ENCODE measurements at regions of chr17 and their contacts with region 1.

Region 1: DNA sequence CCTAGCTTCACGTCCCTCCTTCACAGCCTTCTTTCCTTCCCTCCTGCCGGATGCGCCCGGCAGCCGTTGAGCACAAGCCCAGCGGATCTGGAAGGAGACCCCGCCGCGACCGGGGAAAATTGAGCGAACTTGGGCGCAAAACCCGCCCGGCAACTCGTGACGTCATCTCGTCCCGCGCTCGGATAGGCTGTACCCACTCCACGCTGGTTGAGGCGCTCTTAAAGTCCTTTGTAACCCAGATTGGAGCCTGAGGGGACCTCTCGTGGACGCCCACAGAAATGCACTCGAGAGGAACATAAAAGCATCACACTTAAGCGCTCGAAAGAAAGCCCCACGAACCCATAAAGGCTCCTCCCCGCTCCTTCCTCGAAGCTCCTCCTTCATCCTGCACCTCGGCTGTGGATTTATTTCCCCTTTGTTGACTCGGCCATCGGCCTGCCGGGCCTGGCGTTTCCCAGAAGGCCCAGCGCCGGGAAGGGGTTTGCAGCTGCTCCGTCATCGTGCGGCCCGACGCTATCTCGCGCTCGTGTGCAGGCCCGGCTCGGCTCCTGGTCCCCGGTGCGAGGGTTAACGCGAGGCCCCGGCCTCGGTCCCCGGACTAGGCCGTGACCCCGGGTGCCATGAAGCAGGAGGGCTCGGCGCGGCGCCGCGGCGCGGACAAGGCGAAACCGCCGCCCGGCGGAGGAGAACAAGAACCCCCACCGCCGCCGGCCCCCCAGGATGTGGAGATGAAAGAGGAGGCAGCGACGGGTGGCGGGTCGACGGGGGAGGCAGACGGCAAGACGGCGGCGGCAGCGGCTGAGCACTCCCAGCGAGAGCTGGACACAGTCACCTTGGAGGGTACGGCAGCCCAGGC is at the start of gene PSMD3:
- DNase-seq: peak; percentile 100
- H3K4me3 Mint-ChIP-seq: peak within 1 kb of the TSS; percentile 77
- H3K27ac Mint-ChIP-seq: peak within 1 kb of the TSS; percentile 81
- H3K4me1 Mint-ChIP-seq: peaks cover 26% of the 10 kb centered on the region
- H3K27me3 Mint-ChIP-seq: peaks cover 43% of the 10 kb centered on the region
- CTCF ChIP-seq: no peak
- total RNA-seq, gene PSMD3: 2,152 and 2,179 TPM in 2 replicates

Region 2: GRCh38 chr17:39636927-39637736 is 343.4 kb before region 1 on chr17 and contains the start of gene STARD3:
- CTCF ChIA-PET with region 1: interaction called, 5,681 read pairs
- intact Hi-C with region 1: no loop called
- DNase-seq: no peak
- H3K4me3 Mint-ChIP-seq: peak within 1 kb of the TSS; percentile 71
- H3K27ac Mint-ChIP-seq: peak within 1 kb of the TSS; percentile 28
- H3K4me1 Mint-ChIP-seq: peaks cover 61% of the 10 kb centered on the region
- H3K27me3 Mint-ChIP-seq: peaks cover 5% of the 10 kb centered on the region
- CTCF ChIP-seq: no peak
- total RNA-seq, gene STARD3: 2,579 and 2,697 TPM in 2 replicates

Region 3: DNA sequence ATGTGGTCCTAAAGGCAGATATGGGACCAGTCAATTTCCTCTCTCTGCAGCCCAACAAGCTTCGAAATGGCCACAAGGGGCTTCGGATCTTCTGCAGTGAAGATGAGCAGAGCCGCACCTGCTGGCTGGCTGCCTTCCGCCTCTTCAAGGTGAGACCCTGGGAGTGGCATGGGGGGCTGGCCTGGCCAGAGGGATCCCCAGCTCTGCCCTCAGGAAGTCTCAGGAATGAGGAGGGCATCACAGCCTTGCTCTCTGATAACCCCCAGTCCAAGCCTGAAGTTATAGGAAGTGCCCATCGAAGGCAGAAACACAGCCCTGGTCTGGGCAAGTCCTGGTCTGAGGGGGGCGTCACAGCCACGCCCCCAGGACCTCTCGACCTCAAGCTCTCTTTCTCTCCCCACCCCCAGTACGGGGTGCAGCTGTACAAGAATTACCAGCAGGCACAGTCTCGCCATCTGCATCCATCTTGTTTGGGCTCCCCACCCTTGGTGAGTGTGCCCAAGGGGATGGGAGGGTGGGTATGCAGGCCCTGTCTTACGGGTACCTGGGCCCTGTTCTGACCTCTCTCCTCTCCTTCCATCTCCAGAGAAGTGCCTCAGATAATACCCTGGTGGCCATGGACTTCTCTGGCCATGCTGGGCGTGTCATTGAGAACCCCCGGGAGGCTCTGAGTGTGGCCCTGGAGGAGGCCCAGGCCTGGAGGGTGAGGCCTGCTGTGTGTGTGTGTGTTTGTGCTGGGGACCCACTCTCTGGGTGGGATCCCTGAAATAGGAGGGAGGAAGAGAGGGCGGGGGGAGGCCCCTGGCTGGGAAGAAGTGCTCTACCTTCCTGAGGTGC is 235.5 kb before region 1 on chr17:
- CTCF ChIA-PET with region 1: interaction called, 109 read pairs
- intact Hi-C with region 1: no loop called
- DNase-seq: no peak
- H3K4me3 Mint-ChIP-seq: no peak overlapping the region
- H3K27ac Mint-ChIP-seq: no peak overlapping the region
- H3K4me1 Mint-ChIP-seq: peaks cover 32% of the 10 kb centered on the region
- H3K27me3 Mint-ChIP-seq: no peaks in the 10 kb centered on the region
- CTCF ChIP-seq: no peak

Region 4: GRCh38 chr17:39822051-39822451 is 158.5 kb before region 1 on chr17:
- CTCF ChIA-PET with region 1: interaction called, 1,809 read pairs
- intact Hi-C with region 1: no loop called
- DNase-seq: peak; percentile 59
- H3K4me3 Mint-ChIP-seq: no peak overlapping the region
- H3K27ac Mint-ChIP-seq: no peak overlapping the region
- H3K4me1 Mint-ChIP-seq: peaks cover 9% of the 10 kb centered on the region
- H3K27me3 Mint-ChIP-seq: no peaks in the 10 kb centered on the region
- CTCF ChIP-seq: no peak

Region 5: DNA sequence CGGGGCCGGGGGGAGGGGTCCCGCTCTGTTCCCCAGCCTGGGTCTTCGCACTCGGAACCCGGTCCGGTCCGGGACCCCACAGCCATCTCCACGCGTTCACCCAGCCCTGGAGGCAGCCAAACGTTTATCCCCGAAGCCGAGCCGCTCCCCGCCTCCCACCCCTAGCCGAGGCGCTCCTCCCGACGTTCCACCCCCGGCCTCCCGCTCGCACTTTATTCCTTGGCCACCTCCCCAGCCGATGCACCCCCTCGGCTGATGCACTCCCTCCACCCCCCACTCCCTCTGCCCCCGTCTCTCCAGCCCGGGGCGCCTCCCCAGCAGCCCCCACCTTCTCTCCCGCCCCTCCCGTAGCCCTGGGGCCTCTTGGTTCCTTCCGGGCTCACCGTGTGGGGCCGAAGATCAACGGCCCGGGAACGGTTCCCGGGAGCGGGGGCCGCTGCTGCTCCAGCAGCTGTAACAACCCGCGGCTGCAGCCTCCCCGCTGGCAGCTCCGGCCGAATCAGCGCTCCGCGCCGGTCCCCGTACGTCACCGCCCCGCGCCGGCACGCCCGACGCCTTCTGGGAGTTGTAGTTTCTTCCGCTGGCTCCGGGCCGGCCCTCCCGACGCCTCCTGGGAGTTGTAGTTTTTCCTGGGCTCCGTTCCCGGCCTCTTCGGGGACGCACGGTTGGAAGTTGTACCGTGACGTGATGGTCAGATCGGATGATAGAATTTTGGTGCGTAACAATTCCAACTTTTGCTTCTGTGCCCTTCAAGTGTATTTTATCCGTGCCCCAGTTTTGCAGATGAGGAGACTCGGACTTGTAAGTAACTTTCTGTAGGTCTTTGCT is 53.3 kb before region 1 on chr17 and contains the starts of genes LRRC3C and ORMDL3:
- CTCF ChIA-PET with region 1: interaction called, 6,506 read pairs
- intact Hi-C with region 1: loop called (anchors 1 kb)
- DNase-seq: no peak
- H3K4me3 Mint-ChIP-seq: peak within 1 kb of the TSS; percentile 74
- H3K27ac Mint-ChIP-seq: peak within 1 kb of the TSS; percentile 66
- H3K4me1 Mint-ChIP-seq: peaks cover 60% of the 10 kb centered on the region
- H3K27me3 Mint-ChIP-seq: no peaks in the 10 kb centered on the region
- CTCF ChIP-seq: no peak
- total RNA-seq, gene LRRC3C: not detected in 2 replicates
- total RNA-seq, gene ORMDL3: 1,738 and 1,968 TPM in 2 replicates

Region 6: GRCh38 chr17:40075201-40075941 is 94.8 kb after region 1 on chr17:
- CTCF ChIA-PET with region 1: interaction called, 18 read pairs
- intact Hi-C with region 1: no loop called
- DNase-seq: peak; percentile 98
- H3K4me3 Mint-ChIP-seq: peak overlapping the region; percentile 14
- H3K27ac Mint-ChIP-seq: peak overlapping the region; percentile 6
- H3K4me1 Mint-ChIP-seq: peaks cover 70% of the 10 kb centered on the region
- H3K27me3 Mint-ChIP-seq: no peaks in the 10 kb centered on the region
- CTCF ChIP-seq: no peak

Region 7: GRCh38 chr17:40303009-40303657 is 322.6 kb after region 1 on chr17:
- CTCF ChIA-PET with region 1: no interaction called
- intact Hi-C with region 1: no loop called
- DNase-seq: peak; percentile 94
- H3K4me3 Mint-ChIP-seq: no peak overlapping the region
- H3K27ac Mint-ChIP-seq: peak overlapping the region; percentile 26
- H3K4me1 Mint-ChIP-seq: peaks cover 34% of the 10 kb centered on the region
- H3K27me3 Mint-ChIP-seq: no peaks in the 10 kb centered on the region
- CTCF ChIP-seq: peak; percentile 99

Region 8: DNA sequence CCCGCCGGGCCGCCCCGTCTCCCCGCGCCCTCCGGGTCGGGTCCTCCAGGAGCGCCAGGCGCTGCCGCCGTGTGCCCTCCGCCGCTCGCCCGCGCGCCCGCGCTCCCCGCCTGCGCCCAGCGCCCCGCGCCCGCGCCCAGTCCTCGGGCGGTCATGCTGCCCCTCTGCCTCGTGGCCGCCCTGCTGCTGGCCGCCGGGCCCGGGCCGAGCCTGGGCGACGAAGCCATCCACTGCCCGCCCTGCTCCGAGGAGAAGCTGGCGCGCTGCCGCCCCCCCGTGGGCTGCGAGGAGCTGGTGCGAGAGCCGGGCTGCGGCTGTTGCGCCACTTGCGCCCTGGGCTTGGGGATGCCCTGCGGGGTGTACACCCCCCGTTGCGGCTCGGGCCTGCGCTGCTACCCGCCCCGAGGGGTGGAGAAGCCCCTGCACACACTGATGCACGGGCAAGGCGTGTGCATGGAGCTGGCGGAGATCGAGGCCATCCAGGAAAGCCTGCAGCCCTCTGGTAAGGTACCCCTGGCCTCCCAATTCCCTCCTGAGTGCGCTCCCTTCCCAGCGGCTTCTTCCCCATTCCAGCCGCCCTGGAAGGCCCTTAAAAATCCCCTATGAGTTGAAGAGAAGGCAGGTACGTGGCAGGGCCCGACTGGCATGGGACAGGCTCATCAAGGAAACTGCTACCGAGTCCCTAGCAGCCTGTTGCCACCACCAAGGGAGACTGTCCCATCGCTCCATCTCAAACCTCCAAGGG is 463.2 kb after region 1 on chr17:
- CTCF ChIA-PET with region 1: interaction called, 24 read pairs
- intact Hi-C with region 1: no loop called
- DNase-seq: peak; percentile 100
- H3K4me3 Mint-ChIP-seq: peak overlapping the region; percentile 1
- H3K27ac Mint-ChIP-seq: no peak overlapping the region
- H3K4me1 Mint-ChIP-seq: peaks cover 35% of the 10 kb centered on the region
- H3K27me3 Mint-ChIP-seq: peaks cover 37% of the 10 kb centered on the region
- CTCF ChIP-seq: no peak

Measured in Calu3 (cell line).